OCI-LY7 (cell line): ENCODE measurements at regions of chr3 and their contacts with region 1.

Region 1: GRCh38 chr3:36969540-36970432 is 23.1 kb downstream of the EPM2AIP1 start:
- DNase-seq: peak; percentile 79
- H3K4me3 ChIP-seq: no peak overlapping the region
- H3K27ac ChIP-seq: peak overlapping the region; percentile 33
- H3K4me1 ChIP-seq: peaks cover 40% of the 10 kb centered on the region
- CTCF ChIP-seq: no peak

Region 2: DNA sequence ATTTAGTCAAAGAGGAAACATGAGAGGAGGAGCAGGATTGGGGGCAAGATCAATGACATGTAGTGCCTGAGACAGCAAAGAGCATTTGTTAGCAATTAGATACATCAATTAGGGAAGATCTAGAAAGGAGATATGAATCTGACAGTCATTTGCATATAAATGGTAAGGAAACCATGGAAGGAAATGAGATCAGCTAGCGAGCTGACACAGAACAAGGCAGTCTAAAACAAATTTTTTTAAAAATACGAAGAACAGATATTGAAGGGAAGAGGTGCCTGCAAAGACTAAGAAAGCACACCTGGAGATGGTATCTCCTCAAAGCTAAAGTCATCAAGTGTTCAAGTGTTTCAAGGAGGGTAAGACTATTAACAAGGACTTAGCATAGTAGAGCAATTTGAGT is 18.6 kb after region 1 on chr3:
- CTCF ChIA-PET with region 1: interaction called, 7 read pairs
- POLR2A ChIA-PET with region 1: interaction called, 21 read pairs
- intact Hi-C with region 1: no loop called
- DNase-seq: peak; percentile 32
- H3K4me3 ChIP-seq: peak overlapping the region; percentile 78
- H3K27ac ChIP-seq: no peak overlapping the region
- H3K4me1 ChIP-seq: peaks cover 33% of the 10 kb centered on the region
- CTCF ChIP-seq: no peak

Region 3: DNA sequence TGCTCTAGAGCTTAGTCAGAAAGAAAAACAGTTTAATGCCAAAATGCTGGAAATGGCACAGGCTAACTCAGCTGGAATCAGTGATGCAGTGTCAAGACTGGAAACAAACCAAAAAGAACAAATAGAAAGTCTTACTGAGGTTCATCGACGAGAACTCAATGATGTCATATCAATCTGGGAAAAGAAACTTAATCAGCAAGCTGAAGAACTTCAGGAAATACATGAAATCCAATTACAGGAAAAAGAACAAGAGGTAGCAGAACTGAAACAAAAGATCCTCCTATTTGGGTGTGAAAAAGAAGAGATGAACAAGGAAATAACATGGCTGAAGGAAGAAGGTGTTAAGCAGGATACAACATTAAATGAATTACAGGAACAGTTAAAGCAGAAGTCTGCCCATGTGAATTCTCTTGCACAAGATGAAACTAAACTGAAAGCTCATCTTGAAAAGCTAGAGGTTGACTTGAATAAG is 355.1 kb after region 1 on chr3:
- CTCF ChIA-PET with region 1: no interaction called
- POLR2A ChIA-PET with region 1: no interaction called
- intact Hi-C with region 1: no loop called
- DNase-seq: no peak
- H3K4me3 ChIP-seq: no peak overlapping the region
- H3K27ac ChIP-seq: no peak overlapping the region
- H3K4me1 ChIP-seq: no peaks in the 10 kb centered on the region
- CTCF ChIP-seq: no peak